CD4-positive, alpha-beta memory T cell (primary cell): ENCODE measurements at regions of chr19 and their contacts with region 1.

Region 1: GRCh38 chr19:19554074-19555023 is 16.3 kb downstream of the CILP2 start:
- DNase-seq: peak; percentile 42 to 50 (median 45)
- H3K4me3 ChIP-seq: no peak overlapping the region
- H3K4me3 Mint-ChIP-seq: peak overlapping the region in 1 of 8 donors; percentile 10
- H3K27ac ChIP-seq: no peak overlapping the region
- H3K27ac Mint-ChIP-seq: peak overlapping the region in 1 of 7 donors; percentile 40
- H3K4me1 ChIP-seq: peaks cover 6% of the 10 kb centered on the region
- H3K4me1 Mint-ChIP-seq: peaks cover 10 to 17% (median 12%) of the 10 kb centered on the region in 4 donors
- H3K27me3 ChIP-seq: no peaks in the 10 kb centered on the region
- H3K27me3 Mint-ChIP-seq: no peaks in the 10 kb centered on the region

Region 2: DNA sequence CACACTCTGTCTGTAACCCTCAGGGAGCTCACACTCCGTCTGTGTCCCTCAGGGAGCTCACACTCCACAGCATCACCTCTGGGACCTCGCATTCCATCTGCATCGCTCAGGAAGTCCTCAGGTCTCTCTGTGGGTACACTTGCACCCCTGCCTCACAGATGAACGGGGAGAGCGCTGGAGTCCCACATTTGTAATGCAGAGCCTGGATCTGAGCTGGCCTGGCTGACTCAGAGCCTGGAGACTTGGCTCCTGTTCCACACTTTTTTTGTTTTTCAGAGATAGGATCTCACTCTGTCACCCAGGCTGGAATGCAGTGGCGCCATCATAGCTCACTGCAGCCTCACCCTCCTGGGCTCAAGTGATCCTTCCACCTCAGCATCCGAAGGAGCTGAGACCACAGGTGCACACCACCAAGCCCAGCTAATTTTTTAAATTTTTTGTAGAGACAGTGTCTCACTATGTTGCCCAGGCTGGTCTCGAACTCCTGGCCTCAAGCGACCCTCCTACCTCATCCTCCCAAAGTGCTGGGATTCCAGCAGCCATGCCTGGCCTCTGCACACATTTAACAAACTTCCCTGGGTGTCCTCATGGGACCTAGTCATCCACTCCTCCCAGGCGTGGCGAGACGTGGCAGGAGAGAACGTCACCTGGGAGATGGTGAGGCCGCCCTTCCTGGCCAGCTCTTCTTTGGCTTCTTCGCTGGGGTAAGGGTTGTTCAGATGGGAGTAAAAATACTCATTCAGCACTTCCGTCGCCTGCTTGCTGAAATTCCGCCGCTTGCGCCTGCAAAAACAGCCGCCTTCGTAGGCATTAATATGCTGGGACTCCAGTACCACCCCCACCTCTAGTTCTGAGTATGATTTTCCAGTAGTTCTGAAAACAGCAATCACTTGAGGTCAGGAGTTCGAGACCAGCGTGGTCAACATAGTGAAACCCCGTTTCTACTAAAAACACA is 14.7 kb after region 1 on chr19:
- CTCF ChIA-PET with region 1: interaction called, 17 read pairs
- POLR2A ChIA-PET with region 1: no interaction called
- intact Hi-C with region 1: no loop called
- DNase-seq: no peak
- H3K4me3 ChIP-seq: no peak overlapping the region
- H3K4me3 Mint-ChIP-seq: peak overlapping the region in 1 of 8 donors; percentile 20
- H3K27ac ChIP-seq: no peak overlapping the region
- H3K27ac Mint-ChIP-seq: peak overlapping the region; percentile 59 to 85 (median 78)
- H3K4me1 ChIP-seq: no peaks in the 10 kb centered on the region
- H3K4me1 Mint-ChIP-seq: peaks cover 0 to 13% (median 7%) of the 10 kb centered on the region in 4 donors
- H3K27me3 ChIP-seq: no peaks in the 10 kb centered on the region
- H3K27me3 Mint-ChIP-seq: no peaks in the 10 kb centered on the region

Region 3: GRCh38 chr19:19578252-19578651 is 23.9 kb after region 1 on chr19:
- CTCF ChIA-PET with region 1: interaction called, 31 read pairs
- POLR2A ChIA-PET with region 1: no interaction called
- intact Hi-C with region 1: no loop called
- DNase-seq: no peak
- H3K4me3 ChIP-seq: no peak overlapping the region
- H3K4me3 Mint-ChIP-seq: no peak overlapping the region
- H3K27ac ChIP-seq: no peak overlapping the region
- H3K27ac Mint-ChIP-seq: peak overlapping the region in 1 of 7 donors; percentile 25
- H3K4me1 ChIP-seq: peaks cover 7% of the 10 kb centered on the region
- H3K4me1 Mint-ChIP-seq: peaks cover 9 to 22% (median 17%) of the 10 kb centered on the region in 4 donors
- H3K27me3 ChIP-seq: no peaks in the 10 kb centered on the region
- H3K27me3 Mint-ChIP-seq: no peaks in the 10 kb centered on the region